ENCODE measurements at regions of chr6 and their contacts with region 1.

Region 1: DNA sequence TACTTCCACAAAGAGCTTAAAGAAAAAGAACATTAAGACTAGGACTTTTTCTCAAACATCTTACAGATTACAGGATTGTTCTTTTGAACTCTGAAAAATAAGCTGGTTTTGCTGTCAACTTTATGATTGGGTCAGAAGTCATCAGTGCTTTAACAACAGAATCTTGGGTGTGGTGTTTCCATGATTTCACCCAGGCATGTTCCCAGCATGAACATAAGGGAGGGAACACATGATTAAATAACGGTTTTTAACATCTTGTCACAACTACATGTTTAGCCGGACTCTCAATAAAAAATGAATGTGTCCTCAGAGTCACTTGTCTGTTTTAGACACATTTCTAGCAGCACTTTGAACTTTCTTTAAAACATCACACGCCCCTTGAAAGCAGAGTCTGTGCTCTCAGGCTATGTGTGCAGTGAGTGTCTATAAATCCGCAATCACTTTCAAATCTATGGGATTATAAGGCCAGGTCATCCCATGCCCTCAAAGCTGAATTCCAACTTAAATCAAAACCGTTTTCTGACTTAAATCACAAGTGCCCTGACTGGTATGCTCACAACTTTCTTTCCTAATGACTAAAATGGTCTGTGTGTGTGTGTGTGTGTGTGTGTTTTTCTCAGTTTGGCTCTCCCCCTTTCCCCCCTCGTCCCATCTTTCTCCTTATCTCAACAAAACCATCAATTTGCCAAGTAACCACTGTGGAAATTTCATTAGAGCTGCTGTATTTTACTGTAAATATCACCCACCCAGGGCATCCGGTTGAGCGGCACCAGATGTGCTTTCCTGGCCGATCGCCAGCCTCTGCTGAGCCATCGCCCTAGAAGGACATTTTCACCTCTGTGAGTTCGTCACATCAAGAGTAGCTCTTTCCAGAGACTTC is 216.8 kb upstream of the DTNBP1 start:
- DNase-seq: peak; percentile 29
- H3K4me3 Mint-ChIP-seq: no peak overlapping the region
- H3K27ac Mint-ChIP-seq: peak overlapping the region; percentile 68
- H3K4me1 Mint-ChIP-seq: peaks cover 49% of the 10 kb centered on the region
- H3K27me3 Mint-ChIP-seq: no peaks in the 10 kb centered on the region

Region 2: GRCh38 chr6:15735567-15736265 is 143.9 kb before region 1 on chr6:
- intact Hi-C with region 1: loop called (anchors 2 kb)
- DNase-seq: no peak
- H3K4me3 Mint-ChIP-seq: peak overlapping the region; percentile 59
- H3K27ac Mint-ChIP-seq: peak overlapping the region; percentile 83
- H3K4me1 Mint-ChIP-seq: peaks cover 54% of the 10 kb centered on the region
- H3K27me3 Mint-ChIP-seq: no peaks in the 10 kb centered on the region

Region 3: DNA sequence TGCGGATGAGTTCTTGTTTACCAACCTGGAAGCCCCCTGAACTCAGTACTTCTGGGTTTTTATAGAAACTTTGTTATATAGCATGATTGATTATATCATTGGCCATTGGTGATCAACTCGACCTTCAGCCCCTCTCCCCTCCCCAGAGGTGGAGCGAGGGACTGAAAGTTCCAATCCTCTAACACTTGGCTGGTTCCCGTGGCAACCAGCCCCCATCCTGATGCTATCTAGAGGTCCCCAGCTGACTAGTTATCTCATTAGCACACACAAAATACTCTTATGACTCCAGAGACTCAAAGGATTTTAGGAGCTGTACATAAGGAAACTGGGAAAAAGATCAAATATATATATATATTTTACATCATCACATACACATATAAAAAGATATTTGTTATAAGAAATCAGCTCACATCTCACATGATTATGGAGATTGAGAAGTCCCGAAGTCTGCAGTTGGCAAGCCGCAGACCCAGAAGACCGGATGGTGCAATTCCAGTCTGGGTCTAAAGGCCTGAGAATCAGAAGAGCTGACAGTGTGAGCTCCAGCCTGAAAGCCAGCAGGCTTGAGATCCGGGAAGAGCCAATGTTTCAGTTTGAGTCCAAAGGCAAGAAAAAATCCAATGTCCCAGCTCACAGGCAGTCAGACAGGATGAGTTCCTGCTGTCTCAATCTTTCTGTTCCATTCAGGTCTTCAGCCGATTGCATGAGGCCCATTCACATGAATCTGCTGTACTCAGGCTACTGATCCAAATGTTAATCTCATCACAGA is 37.5 kb before region 1 on chr6:
- intact Hi-C with region 1: loop called (anchors 5 kb)
- DNase-seq: no peak
- H3K4me3 Mint-ChIP-seq: no peak overlapping the region
- H3K27ac Mint-ChIP-seq: peak overlapping the region; percentile 63
- H3K4me1 Mint-ChIP-seq: peaks cover 39% of the 10 kb centered on the region
- H3K27me3 Mint-ChIP-seq: no peaks in the 10 kb centered on the region

Measured in activated T-helper 2 cell treated with anti-CD3 and anti-CD28 coated beads, Interferon-gamma antibody, Interleukin-2, Interleukin-4, amounts not matched to agents 10 μg/mL and 5 μg/mL and 100 μg/mL, durations not matched to agents 14 hours and 24 hours and 36 hours (primary cell).